ENCODE measurements at regions of chr6 and their contacts with region 1.

Region 1: DNA sequence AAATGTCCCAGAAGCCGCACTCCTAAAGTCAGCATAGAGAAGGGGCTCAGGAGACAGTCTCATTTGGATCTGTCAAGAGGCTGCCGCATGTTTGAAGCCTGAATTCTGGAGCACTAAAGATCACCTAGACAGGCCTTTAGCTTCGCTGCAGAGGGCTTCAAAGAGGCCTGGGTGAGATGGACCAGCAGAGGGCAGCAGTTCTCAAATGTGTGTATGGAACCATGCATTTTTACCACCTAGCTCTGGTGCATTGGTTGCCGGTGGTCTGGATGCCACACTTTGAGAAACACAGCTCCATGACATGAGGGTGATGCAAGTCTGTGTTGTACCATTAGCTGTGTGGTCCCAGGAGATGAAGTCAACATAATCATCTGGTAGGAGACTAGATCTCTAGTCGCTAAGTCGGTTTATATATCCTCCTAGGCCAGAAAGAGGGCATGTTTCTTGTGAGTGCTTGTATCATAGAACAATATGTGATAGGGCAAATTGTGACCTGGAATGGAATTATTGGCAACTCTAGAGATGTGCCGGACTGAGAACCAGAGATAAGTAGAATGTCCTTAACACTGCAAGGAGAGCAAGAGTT is 64.8 kb downstream of the KIAA0319 start:
- DNase-seq: peak; percentile 57
- H3K4me3 ChIP-seq: no peak overlapping the region; a peak in 1 of 4 replicates
- H3K27ac ChIP-seq: no peak overlapping the region
- H3K4me1 ChIP-seq: peaks cover 5 to 13% of the 10 kb centered on the region in 2 experiments; a peak in 2 of 4 replicates
- H3K27me3 ChIP-seq: no peaks in the 10 kb centered on the region; the same call in 1 of the 2 replicates
- CTCF ChIP-seq: peak; percentile 86
- EP300 ChIP-seq: no peak
- RAD21 ChIP-seq: peak; percentile 82

Region 2: DNA sequence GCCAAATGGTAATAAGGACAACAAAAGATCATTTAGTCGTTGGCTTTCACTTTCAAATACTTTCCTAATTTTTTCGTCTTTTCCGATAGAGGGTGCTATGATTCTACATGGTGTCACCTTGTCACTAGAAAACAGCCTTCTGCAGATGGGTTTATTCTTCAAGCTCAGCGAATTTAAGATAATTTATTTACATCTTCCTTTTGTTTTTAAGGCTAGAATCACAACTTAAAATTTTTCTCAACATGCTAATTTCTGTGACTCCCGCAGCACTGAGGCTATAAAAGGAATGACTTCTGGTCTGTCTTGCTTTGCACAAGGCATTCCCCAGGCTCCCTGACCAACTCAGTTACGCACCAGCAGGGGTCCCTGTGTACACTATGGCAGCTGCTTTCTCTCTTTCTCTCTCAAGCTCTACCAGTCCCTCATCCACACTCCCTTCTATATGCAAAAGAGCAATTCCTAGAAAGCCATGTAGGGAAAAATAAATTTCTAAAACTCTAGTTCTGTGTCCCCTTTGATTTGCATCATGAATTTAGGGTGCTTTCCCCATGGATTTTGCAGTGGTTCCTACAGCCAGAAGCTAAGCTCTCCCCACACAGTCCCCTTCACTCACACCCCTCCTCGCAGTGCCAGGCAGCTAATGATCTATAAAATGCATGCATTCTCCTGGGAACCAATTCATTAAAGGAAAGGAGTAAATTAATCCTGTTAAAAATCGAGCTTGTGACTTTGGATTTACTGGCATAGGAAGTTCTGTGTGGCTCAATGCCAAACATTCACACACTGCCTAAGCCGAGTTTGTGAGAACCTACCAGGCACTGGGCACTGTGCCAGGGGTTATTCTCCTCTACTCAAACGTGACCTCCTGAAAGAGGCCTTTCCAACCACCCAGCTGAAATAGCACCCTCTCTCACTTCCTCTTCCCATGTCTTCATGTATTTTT is 297.9 kb before region 1 on chr6:
- CTCF ChIA-PET with region 1: interaction called, 10 read pairs
- POLR2A ChIA-PET with region 1: no interaction called
- DNase-seq: peak; percentile 78
- H3K4me3 ChIP-seq: peak overlapping the region in 1 of 2 experiments; percentile 40; a peak in 1 of 4 replicates
- H3K27ac ChIP-seq: no peak overlapping the region
- H3K4me1 ChIP-seq: peaks cover 0 to 7% of the 10 kb centered on the region in 2 experiments; a peak in 3 of 4 replicates
- H3K27me3 ChIP-seq: no peaks in the 10 kb centered on the region
- CTCF ChIP-seq: peak; percentile 69
- EP300 ChIP-seq: no peak
- RAD21 ChIP-seq: peak; percentile 64

Region 3: GRCh38 chr6:24543683-24544082 is 37.5 kb before region 1 on chr6:
- CTCF ChIA-PET with region 1: interaction called, 11 read pairs
- POLR2A ChIA-PET with region 1: no interaction called
- DNase-seq: peak; percentile 42
- H3K4me3 ChIP-seq: no peak overlapping the region
- H3K27ac ChIP-seq: no peak overlapping the region
- H3K4me1 ChIP-seq: peaks cover 0 to 2% of the 10 kb centered on the region in 2 experiments; a peak in 1 of 4 replicates
- H3K27me3 ChIP-seq: no peaks in the 10 kb centered on the region; the same call in 1 of the 2 replicates
- CTCF ChIP-seq: no peak
- EP300 ChIP-seq: no peak
- RAD21 ChIP-seq: no peak

Region 4: GRCh38 chr6:24595512-24596217 is 14.5 kb after region 1 on chr6:
- CTCF ChIA-PET with region 1: interaction called, 52 read pairs
- POLR2A ChIA-PET with region 1: no interaction called
- DNase-seq: no peak
- H3K4me3 ChIP-seq: no peak overlapping the region
- H3K27ac ChIP-seq: no peak overlapping the region
- H3K4me1 ChIP-seq: no peaks in the 10 kb centered on the region
- H3K27me3 ChIP-seq: no peaks in the 10 kb centered on the region
- CTCF ChIP-seq: no peak
- EP300 ChIP-seq: no peak
- RAD21 ChIP-seq: no peak

Region 5: GRCh38 chr6:24636681-24637080 is 55.5 kb after region 1 on chr6:
- CTCF ChIA-PET with region 1: interaction called, 11 read pairs
- POLR2A ChIA-PET with region 1: no interaction called
- DNase-seq: no peak
- H3K4me3 ChIP-seq: no peak overlapping the region
- H3K27ac ChIP-seq: no peak overlapping the region
- H3K4me1 ChIP-seq: peaks cover 0 to 2% of the 10 kb centered on the region in 2 experiments; a peak in 2 of 4 replicates
- H3K27me3 ChIP-seq: no peaks in the 10 kb centered on the region
- CTCF ChIP-seq: no peak
- EP300 ChIP-seq: no peak
- RAD21 ChIP-seq: no peak

Region 6: DNA sequence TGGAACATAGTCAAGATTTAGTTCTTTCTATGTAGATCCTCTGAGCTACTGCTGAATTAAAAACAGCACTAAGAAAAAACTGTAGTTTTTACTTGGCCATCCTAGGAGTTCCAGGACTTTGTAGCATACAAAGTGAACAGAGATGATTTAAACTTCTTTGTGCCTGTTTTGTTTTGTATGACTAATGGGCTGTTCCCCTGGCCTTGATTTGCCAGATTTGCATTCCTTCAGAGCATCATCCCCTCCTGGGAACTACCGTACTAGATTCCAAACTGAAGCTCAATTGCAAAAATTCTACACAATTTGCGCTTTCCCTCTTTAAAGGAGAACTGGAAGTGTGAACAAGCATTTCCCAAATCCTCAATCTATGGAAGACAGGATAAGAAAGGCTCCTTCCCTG is 108.8 kb after region 1 on chr6:
- CTCF ChIA-PET with region 1: interaction called, 65 read pairs
- POLR2A ChIA-PET with region 1: interaction called, 3 read pairs
- DNase-seq: no peak
- H3K4me3 ChIP-seq: no peak overlapping the region
- H3K27ac ChIP-seq: no peak overlapping the region
- H3K4me1 ChIP-seq: no peaks in the 10 kb centered on the region
- H3K27me3 ChIP-seq: no peaks in the 10 kb centered on the region
- CTCF ChIP-seq: no peak
- EP300 ChIP-seq: no peak
- RAD21 ChIP-seq: no peak

Region 7: GRCh38 chr6:24761193-24761835 is 180.1 kb after region 1 on chr6:
- CTCF ChIA-PET with region 1: no interaction called
- POLR2A ChIA-PET with region 1: no interaction called
- DNase-seq: peak; percentile 30
- H3K4me3 ChIP-seq: no peak overlapping the region
- H3K27ac ChIP-seq: no peak overlapping the region
- H3K4me1 ChIP-seq: no peaks in the 10 kb centered on the region
- H3K27me3 ChIP-seq: no peaks in the 10 kb centered on the region
- CTCF ChIP-seq: no peak
- EP300 ChIP-seq: no peak
- RAD21 ChIP-seq: no peak

Measured in SK-N-SH (cell line).